ENCODE measurements at regions of chr9 and their contacts with region 1.

Region 1: DNA sequence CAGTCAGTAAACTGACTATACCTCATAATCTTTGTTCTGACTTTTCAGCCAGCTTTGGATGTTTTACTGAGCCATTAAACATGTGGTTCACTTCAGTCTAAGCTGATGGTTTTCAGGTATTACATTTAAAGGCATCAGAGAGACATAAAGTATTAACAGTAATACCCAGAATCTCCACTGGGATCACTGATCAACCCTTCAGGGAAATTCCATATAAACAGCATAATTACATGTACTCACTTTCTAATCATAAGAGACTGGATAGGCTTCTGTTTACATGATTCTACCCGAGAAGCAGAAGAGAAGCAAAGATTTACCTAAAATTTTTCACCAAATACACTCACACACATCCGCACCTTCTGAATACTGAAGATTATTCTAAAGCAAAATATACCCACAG is 186.7 kb upstream of the FREM1 start:
- DNase-seq: no peak
- H3K4me3 ChIP-seq: no peak overlapping the region
- H3K27ac ChIP-seq: no peak overlapping the region
- H3K4me1 ChIP-seq: no peaks in the 10 kb centered on the region
- H3K27me3 ChIP-seq: no peaks in the 10 kb centered on the region
- CTCF ChIP-seq: no peak

Region 2: GRCh38 chr9:15135164-15135792 is 38.3 kb after region 1 on chr9:
- intact Hi-C with region 1: loop called (anchors 5 kb)
- DNase-seq: peak in 1 of 2 donors; percentile 54
- H3K4me3 ChIP-seq: peak overlapping the region in 1 of 2 donors; percentile 32
- H3K27ac ChIP-seq: peak overlapping the region in 1 of 2 donors; percentile 13
- H3K4me1 ChIP-seq: peaks cover 0 to 5% (median 0%) of the 10 kb centered on the region in 4 donors
- H3K27me3 ChIP-seq: no peaks in the 10 kb centered on the region
- CTCF ChIP-seq: peak; percentile 83 to 94

Region 3: GRCh38 chr9:15306757-15307534 is 210.0 kb after region 1 on chr9 and contains the start of gene TTC39B:
- intact Hi-C with region 1: no loop called
- DNase-seq: peak; percentile 94 to 97
- H3K4me3 ChIP-seq: peak within 1 kb of the TSS; percentile 90 to 92
- H3K27ac ChIP-seq: peak within 1 kb of the TSS; percentile 94 to 95
- H3K4me1 ChIP-seq: peaks cover 0 to 24% (median 6%) of the 10 kb centered on the region in 4 donors
- H3K27me3 ChIP-seq: no peaks in the 10 kb centered on the region
- CTCF ChIP-seq: no peak